ENCODE measurements at regions of chr17 and their contacts with region 1.

Region 1: DNA sequence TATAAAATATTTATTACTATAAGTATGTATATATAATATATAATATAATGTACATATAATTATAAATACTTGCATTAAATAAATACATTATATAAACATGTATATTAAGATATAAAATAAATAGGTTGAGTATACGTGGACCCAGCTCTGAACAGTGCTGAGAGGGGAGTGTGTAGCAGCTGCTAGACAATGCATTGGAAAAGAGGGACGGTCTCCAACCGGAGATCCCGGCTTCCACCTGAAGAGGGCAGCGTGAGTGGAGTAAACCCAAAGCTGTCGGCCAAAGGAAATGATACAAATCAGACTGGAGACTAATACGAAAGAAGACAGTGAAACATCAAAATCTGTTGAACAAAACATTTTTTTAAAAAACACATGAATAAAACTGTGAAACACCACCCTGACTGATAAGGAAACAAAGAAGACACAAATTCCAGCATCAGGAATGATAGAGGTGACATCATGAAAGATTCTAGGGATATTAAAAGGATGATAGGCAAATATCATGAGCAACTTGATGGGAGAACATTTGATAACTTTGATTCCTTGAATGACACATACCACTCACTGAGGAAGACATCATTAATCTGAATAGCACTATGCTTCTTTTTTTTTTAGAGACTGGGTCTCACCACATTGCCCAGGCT is 125.4 kb upstream of the CHMP6 start:
- DNase-seq: peak; percentile 83
- H3K4me3 ChIP-seq: no peak overlapping the region
- H3K27ac ChIP-seq: no peak overlapping the region
- H3K4me1 ChIP-seq: peaks cover 0 to 13% (median 11%) of the 10 kb centered on the region in 4 donors
- H3K27me3 ChIP-seq: no peaks in the 10 kb centered on the region
- CTCF ChIP-seq: peak; percentile 46 to 83 (median 78)
- EP300 ChIP-seq: no peak
- POLR2A ChIP-seq: no peak

Region 2: GRCh38 chr17:80931936-80932265 is 65.6 kb after region 1 on chr17:
- intact Hi-C with region 1: loop called (anchors 10 kb)
- DNase-seq: no peak
- H3K4me3 ChIP-seq: no peak overlapping the region
- H3K27ac ChIP-seq: no peak overlapping the region
- H3K4me1 ChIP-seq: peaks cover 0 to 7% (median 0%) of the 10 kb centered on the region in 4 donors
- H3K27me3 ChIP-seq: no peaks in the 10 kb centered on the region
- CTCF ChIP-seq: no peak
- EP300 ChIP-seq: no peak
- POLR2A ChIP-seq: no peak

Region 3: GRCh38 chr17:80981062-80981902 is 115.0 kb after region 1 on chr17:
- intact Hi-C with region 1: loop called (anchors 2 kb)
- DNase-seq: no peak
- H3K4me3 ChIP-seq: peak overlapping the region in 3 of 4 donors; percentile 18 to 45 (median 45)
- H3K27ac ChIP-seq: peak overlapping the region in 3 of 4 donors; percentile 4 to 43 (median 37)
- H3K4me1 ChIP-seq: peaks cover 4 to 33% (median 28%) of the 10 kb centered on the region in 4 donors
- H3K27me3 ChIP-seq: no peaks in the 10 kb centered on the region
- CTCF ChIP-seq: peak; percentile 12 to 96 (median 64)
- EP300 ChIP-seq: no peak
- POLR2A ChIP-seq: no peak

Region 4: GRCh38 chr17:81044764-81045589 is 178.7 kb after region 1 on chr17:
- intact Hi-C with region 1: no loop called
- DNase-seq: peak; percentile 95
- H3K4me3 ChIP-seq: peak overlapping the region in 1 of 4 donors; percentile 17
- H3K27ac ChIP-seq: peak overlapping the region; percentile 67 to 92 (median 80)
- H3K4me1 ChIP-seq: peaks cover 0 to 98% (median 94%) of the 10 kb centered on the region in 4 donors
- H3K27me3 ChIP-seq: no peaks in the 10 kb centered on the region
- CTCF ChIP-seq: no peak
- EP300 ChIP-seq: no peak
- POLR2A ChIP-seq: no peak

Measured in sigmoid colon (tissue), 7 donors.